Natural killer cell (primary cell): ENCODE measurements at regions of chr20 and their contacts with region 1.

Region 1: DNA sequence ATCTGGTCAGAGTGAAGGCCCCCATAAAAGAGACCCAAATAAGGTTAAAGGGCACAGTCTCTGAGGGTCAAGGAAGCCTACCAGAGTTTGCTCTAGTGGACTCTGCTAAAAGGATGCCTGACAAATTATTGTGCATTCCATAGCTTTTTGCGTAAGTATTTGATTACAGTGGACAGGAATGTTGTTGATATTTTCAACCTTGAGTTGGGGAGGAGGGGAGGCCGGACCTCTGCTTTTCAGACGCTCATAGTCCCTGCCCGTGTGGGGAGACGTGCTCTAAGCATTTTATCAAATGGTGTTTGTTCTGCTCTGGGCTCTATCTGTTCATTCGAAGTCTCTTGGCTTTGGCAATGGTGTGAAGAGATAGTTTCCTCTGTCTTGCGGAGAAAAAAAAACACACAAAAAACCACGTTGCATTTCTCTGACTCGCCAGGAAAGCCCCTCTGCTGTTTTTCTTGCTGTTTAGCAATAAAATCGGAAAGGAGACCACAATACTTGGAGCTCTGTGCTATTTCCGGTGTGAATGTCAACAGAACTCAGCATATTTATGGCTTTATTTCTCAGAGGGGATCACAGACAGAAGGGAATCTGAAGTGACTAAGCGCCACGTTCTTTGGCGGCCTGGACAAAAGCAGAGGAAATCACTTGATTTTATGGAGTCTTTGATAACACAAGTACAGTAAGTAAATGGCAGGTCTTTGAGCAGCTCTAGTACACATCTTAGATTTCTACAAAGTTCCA is 159.8 kb downstream of the ZFP64 start:
- DNase-seq: peak; percentile 33 to 71
- ATAC-seq: peak; percentile 83 to 90 (median 87)
- H3K4me3 ChIP-seq: no peak overlapping the region
- H3K4me3 Mint-ChIP-seq: peak overlapping the region; percentile 82
- H3K27ac ChIP-seq: peak overlapping the region; percentile 63
- H3K27ac Mint-ChIP-seq: peak overlapping the region; percentile 86 to 92
- H3K4me1 ChIP-seq: peaks cover 36% of the 10 kb centered on the region
- H3K4me1 Mint-ChIP-seq: peaks cover 28 to 37% of the 10 kb centered on the region in 2 donors
- H3K27me3 ChIP-seq: no peaks in the 10 kb centered on the region
- H3K27me3 Mint-ChIP-seq: no peaks in the 10 kb centered on the region
- CTCF ChIP-seq: no peak

Region 2: GRCh38 chr20:51667002-51667408 is 364.7 kb before region 1 on chr20:
- intact Hi-C with region 1: loop called (anchors 2 kb)
- DNase-seq: peak; percentile 39 to 51
- ATAC-seq: peak; percentile 84 to 92 (median 87)
- H3K4me3 ChIP-seq: no peak overlapping the region
- H3K4me3 Mint-ChIP-seq: peak overlapping the region; percentile 85
- H3K27ac ChIP-seq: peak overlapping the region; percentile 52
- H3K27ac Mint-ChIP-seq: peak overlapping the region; percentile 82 to 85
- H3K4me1 ChIP-seq: peaks cover 38% of the 10 kb centered on the region
- H3K4me1 Mint-ChIP-seq: peaks cover 42 to 48% of the 10 kb centered on the region in 2 donors
- H3K27me3 ChIP-seq: no peaks in the 10 kb centered on the region
- H3K27me3 Mint-ChIP-seq: no peaks in the 10 kb centered on the region
- CTCF ChIP-seq: no peak

Region 3: GRCh38 chr20:52015155-52015554 is 16.6 kb before region 1 on chr20:
- intact Hi-C with region 1: no loop called
- DNase-seq: no peak
- ATAC-seq: no peak
- H3K4me3 ChIP-seq: no peak overlapping the region
- H3K4me3 Mint-ChIP-seq: no peak overlapping the region
- H3K27ac ChIP-seq: no peak overlapping the region
- H3K27ac Mint-ChIP-seq: no peak overlapping the region
- H3K4me1 ChIP-seq: no peaks in the 10 kb centered on the region
- H3K4me1 Mint-ChIP-seq: no peaks in the 10 kb centered on the region
- H3K27me3 ChIP-seq: no peaks in the 10 kb centered on the region
- H3K27me3 Mint-ChIP-seq: no peaks in the 10 kb centered on the region
- CTCF ChIP-seq: no peak

Region 4: DNA sequence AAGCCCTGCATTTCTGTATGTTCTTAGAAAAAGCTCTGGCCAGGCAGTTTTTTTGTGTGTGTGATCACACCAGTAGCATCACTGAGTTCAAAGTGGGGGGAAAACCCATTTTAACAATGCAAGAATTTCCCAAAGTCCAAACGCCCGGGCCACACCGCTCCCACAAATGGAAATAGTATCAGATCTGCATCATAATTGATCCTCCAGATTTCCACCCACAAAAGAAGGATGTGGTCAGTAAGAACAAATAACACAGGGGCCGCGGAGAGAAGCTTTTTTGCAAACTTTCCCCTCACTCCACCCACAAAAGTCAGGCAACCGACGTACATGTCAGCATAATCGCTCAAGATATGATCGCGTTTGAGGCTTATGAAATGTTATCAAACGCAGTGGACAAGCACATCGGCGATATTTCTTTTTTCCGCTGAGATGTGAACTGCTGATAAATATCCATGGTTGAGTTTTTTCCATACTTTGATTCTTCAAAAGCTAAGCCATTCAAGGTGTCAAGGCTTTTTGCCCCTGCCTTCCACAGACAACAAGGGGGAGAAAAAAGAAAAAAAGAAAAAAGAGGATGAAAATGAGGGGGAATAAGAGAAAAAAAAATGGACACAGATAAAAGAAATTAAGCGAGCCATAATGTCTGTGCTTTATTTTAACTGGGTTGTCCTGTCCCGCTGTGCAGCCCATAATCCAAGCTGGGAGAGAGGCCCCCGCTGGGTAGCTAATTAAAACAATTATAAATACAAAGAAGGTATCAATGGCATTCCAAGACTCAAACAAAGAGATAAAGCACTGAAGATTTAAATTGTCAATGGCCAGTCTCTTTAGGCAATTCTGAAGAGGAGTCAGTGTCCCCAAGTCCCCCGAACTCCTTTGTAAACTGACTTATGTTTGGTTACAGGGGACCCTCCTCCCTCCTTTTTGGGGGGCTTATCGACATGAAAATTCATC is 16.4 kb after region 1 on chr20:
- intact Hi-C with region 1: loop called (anchors 1 kb)
- DNase-seq: peak; percentile 47 to 72
- ATAC-seq: peak; percentile 80 to 88 (median 84)
- H3K4me3 ChIP-seq: no peak overlapping the region
- H3K4me3 Mint-ChIP-seq: peak overlapping the region; percentile 87
- H3K27ac ChIP-seq: no peak overlapping the region
- H3K27ac Mint-ChIP-seq: peak overlapping the region; percentile 88 to 92
- H3K4me1 ChIP-seq: peaks cover 16% of the 10 kb centered on the region
- H3K4me1 Mint-ChIP-seq: peaks cover 20 to 28% of the 10 kb centered on the region in 2 donors
- H3K27me3 ChIP-seq: no peaks in the 10 kb centered on the region
- H3K27me3 Mint-ChIP-seq: no peaks in the 10 kb centered on the region
- CTCF ChIP-seq: no peak

Region 5: GRCh38 chr20:52127309-52127708 is 95.6 kb after region 1 on chr20:
- intact Hi-C with region 1: no loop called
- DNase-seq: no peak
- ATAC-seq: no peak
- H3K4me3 ChIP-seq: no peak overlapping the region
- H3K4me3 Mint-ChIP-seq: no peak overlapping the region
- H3K27ac ChIP-seq: no peak overlapping the region
- H3K27ac Mint-ChIP-seq: no peak overlapping the region
- H3K4me1 ChIP-seq: peaks cover 4% of the 10 kb centered on the region
- H3K4me1 Mint-ChIP-seq: peaks cover 0 to 12% of the 10 kb centered on the region in 2 donors
- H3K27me3 ChIP-seq: no peaks in the 10 kb centered on the region
- H3K27me3 Mint-ChIP-seq: no peaks in the 10 kb centered on the region
- CTCF ChIP-seq: no peak